Posterior vena cava (tissue), 2 donors: ENCODE measurements at regions of chr5 and their contacts with region 1.

Region 1: GRCh38 chr5:172721301-172722130 is 49.5 kb downstream of the DUSP1 start:
- DNase-seq: peak; percentile 49

Region 2: DNA sequence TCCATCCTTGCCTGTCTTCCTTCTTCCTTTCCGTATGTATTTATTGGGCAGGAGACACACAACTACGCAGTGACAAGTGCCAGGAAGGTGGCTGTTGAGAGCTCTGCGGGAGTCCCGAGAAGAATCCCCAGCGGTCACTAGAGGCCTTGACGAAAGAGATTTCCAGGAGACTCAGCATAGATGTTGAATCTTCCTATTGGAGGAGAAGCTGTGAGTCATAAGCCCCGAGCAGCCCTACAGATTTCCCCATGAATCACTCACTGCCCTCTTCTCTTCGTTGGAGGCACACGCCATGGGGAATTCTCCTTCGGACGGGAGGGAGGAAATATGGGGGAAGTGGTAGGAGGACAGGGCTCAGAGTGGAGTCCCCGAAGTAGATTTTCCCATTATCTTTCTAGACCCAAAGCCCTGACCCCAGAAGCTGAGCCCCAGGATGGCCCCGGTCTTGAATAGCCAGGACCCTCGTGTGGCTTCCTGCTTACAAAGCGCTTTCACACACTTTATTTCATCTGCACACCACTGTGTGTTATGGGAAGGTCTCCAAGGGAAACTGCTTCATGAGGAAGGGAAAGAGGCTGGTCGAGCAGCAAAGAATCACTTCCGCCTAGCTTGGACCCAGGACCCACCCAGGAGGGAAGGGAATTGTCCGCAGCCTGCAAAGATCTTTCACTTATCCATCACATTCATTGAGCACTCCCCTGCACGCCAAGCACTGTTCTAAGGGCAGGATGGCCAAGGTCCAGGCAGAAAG is 36.7 kb after region 1 on chr5:
- intact Hi-C with region 1: loop called (anchors 5 kb)
- DNase-seq: peak; percentile 81

Region 3: GRCh38 chr5:172764849-172765765 is 43.6 kb after region 1 on chr5:
- intact Hi-C with region 1: loop called in 1 of 2 experiments (anchors 5 kb)
- DNase-seq: peak; percentile 97